Naive thymus-derived CD4-positive, alpha-beta T cell (primary cell): ENCODE measurements at regions of chr9 and their contacts with region 1.

Region 1: DNA sequence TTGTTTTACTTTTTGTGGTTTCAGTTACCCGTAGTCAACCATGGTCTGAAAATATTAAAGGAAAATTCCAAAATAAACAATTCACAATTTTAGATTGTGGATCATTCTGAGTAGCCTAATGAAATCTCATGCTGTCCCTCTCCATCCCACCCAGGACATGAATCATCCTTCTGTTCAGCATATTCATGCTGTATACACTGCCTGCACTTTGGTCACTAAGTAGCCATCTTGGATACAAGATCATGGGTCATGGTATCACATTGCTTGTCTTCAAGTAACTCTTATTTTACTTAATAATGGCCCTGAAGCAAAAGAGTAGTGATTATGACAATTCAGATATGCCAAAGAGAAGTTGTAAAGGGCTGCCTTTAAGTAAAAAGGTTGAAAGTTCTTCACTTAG is 536.5 kb upstream of the ACO1 start:
- DNase-seq: no peak
- ATAC-seq: no peak
- H3K4me3 ChIP-seq: no peak overlapping the region
- H3K4me3 Mint-ChIP-seq: no peak overlapping the region
- H3K27ac ChIP-seq: no peak overlapping the region
- H3K27ac Mint-ChIP-seq: no peak overlapping the region
- H3K4me1 ChIP-seq: no peaks in the 10 kb centered on the region
- H3K4me1 Mint-ChIP-seq: no peaks in the 10 kb centered on the region
- H3K27me3 ChIP-seq: no peaks in the 10 kb centered on the region
- H3K27me3 Mint-ChIP-seq: peaks cover 0 to 9% (median 0%) of the 10 kb centered on the region in 5 donors

Region 2: GRCh38 chr9:31824860-31825259 is 23.1 kb before region 1 on chr9:
- CTCF ChIA-PET with region 1: no interaction called
- POLR2A ChIA-PET with region 1: no interaction called
- intact Hi-C with region 1: no loop called
- DNase-seq: no peak
- ATAC-seq: no peak
- H3K4me3 ChIP-seq: no peak overlapping the region
- H3K4me3 Mint-ChIP-seq: no peak overlapping the region
- H3K27ac ChIP-seq: no peak overlapping the region
- H3K27ac Mint-ChIP-seq: no peak overlapping the region
- H3K4me1 ChIP-seq: no peaks in the 10 kb centered on the region
- H3K4me1 Mint-ChIP-seq: no peaks in the 10 kb centered on the region
- H3K27me3 ChIP-seq: no peaks in the 10 kb centered on the region
- H3K27me3 Mint-ChIP-seq: no peaks in the 10 kb centered on the region

Region 3: DNA sequence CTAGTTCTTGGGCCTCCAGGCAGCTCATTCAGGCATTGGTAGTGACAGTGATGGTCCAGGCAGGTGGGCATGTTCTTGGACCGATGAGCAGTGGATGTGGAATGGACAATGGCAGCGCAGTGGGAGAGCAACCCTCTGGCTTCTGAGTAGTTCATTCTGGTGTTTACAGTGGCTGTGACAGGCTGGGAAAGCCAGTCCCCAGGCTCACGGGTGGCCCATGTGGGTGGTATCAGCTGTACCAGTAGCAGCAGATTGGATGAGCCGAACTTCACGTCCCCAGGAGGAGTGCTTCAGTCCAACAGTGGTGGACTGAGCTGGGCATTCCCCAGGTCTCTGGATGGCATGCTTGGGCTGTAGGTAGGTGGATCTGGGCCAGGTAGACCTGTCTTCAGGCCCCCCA is 20.9 kb after region 1 on chr9:
- CTCF ChIA-PET with region 1: no interaction called
- POLR2A ChIA-PET with region 1: no interaction called
- intact Hi-C with region 1: loop called in 1 of 2 experiments (anchors 2 kb)
- DNase-seq: no peak
- ATAC-seq: no peak
- H3K4me3 ChIP-seq: no peak overlapping the region
- H3K4me3 Mint-ChIP-seq: no peak overlapping the region
- H3K27ac ChIP-seq: no peak overlapping the region
- H3K27ac Mint-ChIP-seq: no peak overlapping the region
- H3K4me1 ChIP-seq: no peaks in the 10 kb centered on the region
- H3K4me1 Mint-ChIP-seq: peaks cover 0 to 2% (median 0%) of the 10 kb centered on the region in 7 donors
- H3K27me3 ChIP-seq: no peaks in the 10 kb centered on the region
- H3K27me3 Mint-ChIP-seq: peaks cover 0 to 12% (median 3%) of the 10 kb centered on the region in 5 donors

Region 4: DNA sequence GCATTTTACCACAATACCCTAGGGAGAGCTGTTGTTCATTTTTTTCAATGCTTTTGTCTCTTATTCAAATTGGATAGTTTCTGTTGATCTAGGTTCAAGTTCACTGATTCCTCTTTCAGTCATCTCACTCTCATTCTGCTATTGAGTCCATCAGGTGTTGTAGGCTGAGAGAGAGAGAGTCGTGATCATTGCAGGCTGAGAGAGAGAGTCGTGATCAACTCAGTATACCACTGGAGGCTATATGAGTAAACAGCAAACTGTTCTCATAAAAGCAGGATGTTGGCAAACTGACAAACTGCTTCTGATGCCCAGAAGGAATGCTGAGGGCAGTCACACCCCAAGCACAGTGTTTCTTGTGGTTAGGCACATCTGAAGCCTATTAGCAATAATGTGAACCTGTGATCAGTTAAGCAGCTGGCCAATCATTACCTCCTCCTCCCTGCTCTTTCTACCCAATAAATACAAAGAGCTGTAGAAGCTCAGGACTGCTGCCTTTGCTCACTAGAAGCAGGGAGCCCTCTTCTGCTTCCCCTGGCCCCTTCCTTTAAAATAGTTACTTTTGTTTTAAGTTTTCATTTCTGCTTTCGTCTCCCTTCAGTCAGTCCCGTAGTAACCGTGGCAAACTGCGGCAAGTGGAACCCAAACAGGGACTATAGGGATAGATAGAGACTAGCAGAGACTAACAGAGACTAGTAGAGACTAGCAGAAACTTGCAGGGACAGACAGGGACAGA is 60.4 kb after region 1 on chr9:
- CTCF ChIA-PET with region 1: no interaction called
- POLR2A ChIA-PET with region 1: no interaction called
- intact Hi-C with region 1: no loop called
- DNase-seq: no peak
- ATAC-seq: no peak
- H3K4me3 ChIP-seq: no peak overlapping the region
- H3K4me3 Mint-ChIP-seq: peak overlapping the region in 5 of 10 donors; percentile 0 to 54 (median 40)
- H3K27ac ChIP-seq: no peak overlapping the region
- H3K27ac Mint-ChIP-seq: no peak overlapping the region
- H3K4me1 ChIP-seq: no peaks in the 10 kb centered on the region
- H3K4me1 Mint-ChIP-seq: peaks cover 0 to 5% (median 0%) of the 10 kb centered on the region in 7 donors
- H3K27me3 ChIP-seq: no peaks in the 10 kb centered on the region
- H3K27me3 Mint-ChIP-seq: peaks cover 0 to 4% (median 0%) of the 10 kb centered on the region in 5 donors